ENCODE measurements at regions of chrX and their contacts with region 1.

Region 1: GRCh38 chrX:96449896-96450295 is 234.7 kb upstream of the DIAPH2 start:
- DNase-seq: no peak
- H3K4me3 ChIP-seq: no peak overlapping the region
- H3K4me3 Mint-ChIP-seq: no peak overlapping the region
- H3K27ac Mint-ChIP-seq: no peak overlapping the region
- H3K4me1 ChIP-seq: no peaks in the 10 kb centered on the region
- H3K4me1 Mint-ChIP-seq: no peaks in the 10 kb centered on the region
- H3K27me3 ChIP-seq: no peaks in the 10 kb centered on the region
- H3K27me3 Mint-ChIP-seq: no peaks in the 10 kb centered on the region
- CTCF ChIP-seq: no peak

Region 2: DNA sequence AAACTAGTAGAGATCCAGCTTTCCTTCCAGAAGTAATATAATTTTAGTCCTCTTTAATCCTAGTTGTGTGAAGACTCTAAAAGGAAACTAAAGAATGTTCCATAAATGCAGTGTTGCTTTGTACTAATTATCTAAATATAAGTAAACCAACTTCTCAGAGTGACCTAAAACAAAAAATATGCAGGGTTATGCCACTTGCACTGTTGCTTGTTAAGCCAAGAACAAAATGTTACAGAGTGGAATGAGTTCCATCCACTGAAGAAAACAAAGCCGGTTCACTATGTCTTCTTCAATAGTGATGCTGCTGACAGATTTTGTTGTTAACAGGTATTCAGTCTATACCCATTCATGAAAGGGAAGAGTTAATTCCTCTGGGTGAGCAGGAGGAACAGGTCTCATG is 17.2 kb before region 1 on chrX:
- CTCF ChIA-PET with region 1: interaction called, 12 read pairs
- POLR2A ChIA-PET with region 1: no interaction called
- intact Hi-C with region 1: no loop called
- DNase-seq: no peak
- H3K4me3 ChIP-seq: no peak overlapping the region
- H3K4me3 Mint-ChIP-seq: no peak overlapping the region
- H3K27ac Mint-ChIP-seq: no peak overlapping the region
- H3K4me1 ChIP-seq: no peaks in the 10 kb centered on the region
- H3K4me1 Mint-ChIP-seq: no peaks in the 10 kb centered on the region
- H3K27me3 ChIP-seq: no peaks in the 10 kb centered on the region
- H3K27me3 Mint-ChIP-seq: no peaks in the 10 kb centered on the region
- CTCF ChIP-seq: no peak

Measured in Caco-2 (cell line).